ENCODE measurements at regions of chr5 and their contacts with region 1.

Region 1: GRCh38 chr5:149381987-149382340 is 2.9 kb upstream of the IL17B start:
- DNase-seq: peak; percentile 95
- H3K4me3 ChIP-seq: peak overlapping the region; percentile 47 to 61 (median 52)
- H3K27ac ChIP-seq: peak overlapping the region; percentile 92 to 97 (median 96)
- H3K4me1 ChIP-seq: peaks cover 60 to 94% (median 89%) of the 10 kb centered on the region in 4 donors
- H3K27me3 ChIP-seq: no peaks in the 10 kb centered on the region
- CTCF ChIP-seq: peak; percentile 92 to 98 (median 97)
- EP300 ChIP-seq: no peak
- POLR2A ChIP-seq: no peak

Region 2: DNA sequence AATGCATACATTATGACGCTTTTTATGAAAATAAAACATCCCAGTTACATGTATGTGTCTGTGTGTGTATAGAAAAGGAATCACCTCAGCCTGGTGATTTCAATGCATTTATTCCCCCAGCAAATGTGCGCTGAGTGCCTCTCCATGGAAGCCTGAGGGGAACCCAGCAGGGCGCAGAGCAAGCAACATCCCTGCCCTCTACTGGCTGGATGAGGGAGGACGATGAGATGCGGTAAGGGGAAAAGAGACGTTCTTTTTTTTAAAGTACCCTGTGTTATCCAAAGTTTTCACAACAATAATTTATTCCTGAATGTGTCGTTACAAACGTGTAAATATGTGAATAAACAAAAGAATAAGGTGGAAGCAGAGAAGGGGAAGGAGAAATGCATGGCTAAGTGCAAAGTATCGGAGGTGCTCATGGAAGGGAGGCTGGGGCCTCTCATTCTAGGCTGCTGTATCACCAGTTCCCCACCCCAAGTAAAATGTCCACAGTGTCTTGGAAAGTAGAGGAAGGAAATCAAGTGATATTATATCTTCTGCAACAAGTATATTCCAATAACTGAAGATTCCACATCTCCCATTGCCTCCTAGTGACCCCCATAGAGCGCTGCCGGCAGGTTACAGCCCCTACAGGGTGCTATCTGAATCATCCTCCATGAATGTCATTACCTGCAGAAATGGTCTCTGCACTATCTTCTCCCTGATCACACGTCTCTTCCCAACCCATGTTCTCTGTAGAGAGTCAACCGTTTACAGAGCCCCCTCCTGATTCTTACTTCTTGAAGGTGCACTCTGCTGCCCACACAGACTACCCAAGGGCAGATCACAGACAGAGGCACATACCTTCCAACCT is 253.7 kb before region 1 on chr5:
- intact Hi-C with region 1: no loop called
- DNase-seq: no peak
- H3K4me3 ChIP-seq: no peak overlapping the region
- H3K27ac ChIP-seq: no peak overlapping the region
- H3K4me1 ChIP-seq: peaks cover 0 to under 1% (median 0%) of the 10 kb centered on the region in 4 donors
- H3K27me3 ChIP-seq: no peaks in the 10 kb centered on the region
- CTCF ChIP-seq: peak; percentile 27 to 61 (median 44)
- EP300 ChIP-seq: no peak
- POLR2A ChIP-seq: no peak

Region 3: GRCh38 chr5:149434162-149435014 is 52.4 kb after region 1 on chr5:
- intact Hi-C with region 1: loop called (anchors 2 kb)
- DNase-seq: no peak
- H3K4me3 ChIP-seq: no peak overlapping the region
- H3K27ac ChIP-seq: peak overlapping the region; percentile 94 to 98 (median 96)
- H3K4me1 ChIP-seq: peaks cover 14 to 46% (median 40%) of the 10 kb centered on the region in 4 donors
- H3K27me3 ChIP-seq: no peaks in the 10 kb centered on the region
- CTCF ChIP-seq: peak; percentile 63 to 79 (median 73)
- EP300 ChIP-seq: no peak
- POLR2A ChIP-seq: no peak

Measured in esophagus muscularis mucosa (tissue), 4 donors.